H1 (cell line): ENCODE measurements at regions of chr11 and their contacts with region 1.

Region 1: DNA sequence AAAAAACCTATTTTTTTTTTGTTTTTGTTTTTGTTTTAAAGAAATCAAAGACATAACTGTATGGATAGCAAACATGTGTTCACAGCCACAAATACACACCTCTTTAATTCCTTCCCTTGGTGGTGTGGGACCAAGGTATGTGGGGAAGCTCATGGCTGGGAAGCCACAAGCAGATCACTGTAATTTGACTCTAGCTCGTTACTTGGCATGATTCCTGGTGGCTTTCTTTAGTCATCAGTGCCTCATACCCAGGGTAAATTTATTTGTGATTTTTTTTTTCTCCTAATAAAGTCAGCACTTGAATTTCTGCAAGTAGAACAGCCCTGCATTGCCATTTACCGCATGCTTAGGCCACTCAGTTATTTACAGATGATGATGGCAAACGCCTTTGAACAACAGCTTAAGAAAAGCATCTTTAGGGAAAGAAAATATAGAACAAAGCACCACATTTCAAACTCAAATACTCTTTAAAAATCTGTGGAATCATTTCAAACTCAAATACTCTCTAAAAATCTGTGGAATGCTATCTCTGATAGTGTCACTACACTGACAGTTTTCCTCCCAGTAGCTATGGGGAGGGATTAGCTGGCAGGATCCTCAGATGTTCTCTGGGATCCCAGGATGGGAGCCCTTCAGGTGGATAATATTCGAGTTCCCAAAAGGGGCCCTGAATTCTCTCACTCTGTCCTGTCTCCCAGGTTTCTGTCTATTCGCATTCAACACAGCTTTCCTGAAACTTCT is 687.2 kb downstream of the OPCML start:
- DNase-seq: no peak
- H3K4me3 ChIP-seq: no peak overlapping the region
- H3K27ac ChIP-seq: no peak overlapping the region
- H3K4me1 ChIP-seq: peaks cover 1 to 8% (median 2%) of the 10 kb centered on the region in 4 experiments; a peak in 6 of 7 replicates
- H3K27me3 ChIP-seq: no peaks in the 10 kb centered on the region
- CTCF ChIP-seq: no peak
- EP300 ChIP-seq: no peak
- POLR2A ChIP-seq: no peak
- RAD21 ChIP-seq: no peak

Region 2: DNA sequence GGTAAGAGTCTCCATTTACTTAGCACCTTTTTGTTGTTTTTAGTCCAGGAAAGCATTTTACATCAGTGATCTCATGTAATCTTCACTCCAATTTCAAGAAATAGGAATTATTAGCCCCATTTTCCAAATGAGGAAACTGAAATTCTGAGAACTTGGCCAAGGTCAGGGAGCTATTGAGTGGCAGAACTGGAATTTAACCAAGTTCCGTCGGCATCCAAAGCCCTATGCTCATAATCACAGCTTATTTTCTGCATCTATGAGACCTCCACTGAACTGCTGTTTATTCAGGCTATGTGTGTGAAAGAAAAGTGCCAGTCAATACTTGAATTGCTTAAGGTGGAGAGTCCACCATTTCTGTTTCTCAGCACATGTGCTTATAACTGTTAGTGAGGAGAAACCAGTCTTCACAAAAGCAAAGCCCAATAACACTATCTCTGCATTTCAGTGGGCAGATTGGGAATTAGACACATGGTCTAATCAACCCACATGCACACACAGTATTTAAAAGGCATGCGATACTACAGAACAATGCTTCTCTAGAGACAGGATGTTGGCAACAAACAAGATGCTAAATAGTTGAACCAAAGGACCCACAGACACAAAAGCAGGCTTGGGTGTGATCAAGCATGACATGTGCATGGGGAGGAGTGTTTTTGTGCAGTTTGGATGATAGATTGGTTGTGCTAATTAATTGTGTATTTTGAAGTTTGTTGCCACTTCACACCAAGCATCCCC is 93.4 kb before region 1 on chr11:
- CTCF ChIA-PET with region 1: no interaction called
- POLR2A ChIA-PET with region 1: no interaction called
- DNase-seq: no peak
- H3K4me3 ChIP-seq: no peak overlapping the region
- H3K27ac ChIP-seq: no peak overlapping the region
- H3K4me1 ChIP-seq: peaks cover 0 to 3% (median 1%) of the 10 kb centered on the region in 4 experiments; a peak in 2 of 7 replicates
- H3K27me3 ChIP-seq: no peaks in the 10 kb centered on the region
- CTCF ChIP-seq: no peak
- EP300 ChIP-seq: no peak
- POLR2A ChIP-seq: no peak
- RAD21 ChIP-seq: no peak

Region 3: DNA sequence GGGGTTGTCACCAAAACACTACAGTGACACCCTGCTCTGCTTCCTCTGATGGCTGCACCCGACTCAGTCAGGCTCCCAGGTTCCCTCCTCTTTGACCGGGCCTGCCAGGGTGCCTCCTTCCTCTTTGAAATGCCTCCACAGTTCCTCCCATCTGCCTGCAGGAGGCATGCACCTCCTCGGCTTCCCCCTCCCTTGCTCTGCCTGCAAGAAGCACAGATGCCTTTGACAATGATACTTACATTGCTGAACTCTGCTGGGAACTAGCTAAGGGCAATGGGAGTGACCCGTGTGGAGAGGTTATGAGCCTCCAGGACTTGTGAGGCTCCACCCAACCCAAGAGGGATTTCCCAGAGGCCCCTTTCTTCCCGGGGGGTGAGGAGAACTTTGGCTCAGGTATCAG is 13.1 kb after region 1 on chr11:
- CTCF ChIA-PET with region 1: interaction called, 13 read pairs
- POLR2A ChIA-PET with region 1: interaction called, 3 read pairs
- DNase-seq: peak; percentile 61 to 64
- H3K4me3 ChIP-seq: no peak overlapping the region
- H3K27ac ChIP-seq: no peak overlapping the region
- H3K4me1 ChIP-seq: peaks cover 0 to 4% (median 1%) of the 10 kb centered on the region in 4 experiments; a peak in 2 of 7 replicates
- H3K27me3 ChIP-seq: no peaks in the 10 kb centered on the region
- CTCF ChIP-seq: peak; percentile 41 to 70 (median 61)
- EP300 ChIP-seq: no peak
- POLR2A ChIP-seq: no peak
- RAD21 ChIP-seq: peak; percentile 48 to 59; a peak in 3 of 4 replicates